PC-3 (cell line): ENCODE measurements at regions of chr5 and their contacts with region 1.

Region 1: GRCh38 chr5:55187370-55187769 is 14.4 kb upstream of the CDC20B start:
- DNase-seq: peak; percentile 44
- ATAC-seq: peak; percentile 31; the same call in 1 of the 2 replicates
- H3K4me3 ChIP-seq: no peak overlapping the region
- H3K27ac ChIP-seq: no peak overlapping the region
- H3K4me1 ChIP-seq: peaks cover 13% of the 10 kb centered on the region
- H3K27me3 ChIP-seq: no peaks in the 10 kb centered on the region
- CTCF ChIP-seq: peak; percentile 41

Region 2: DNA sequence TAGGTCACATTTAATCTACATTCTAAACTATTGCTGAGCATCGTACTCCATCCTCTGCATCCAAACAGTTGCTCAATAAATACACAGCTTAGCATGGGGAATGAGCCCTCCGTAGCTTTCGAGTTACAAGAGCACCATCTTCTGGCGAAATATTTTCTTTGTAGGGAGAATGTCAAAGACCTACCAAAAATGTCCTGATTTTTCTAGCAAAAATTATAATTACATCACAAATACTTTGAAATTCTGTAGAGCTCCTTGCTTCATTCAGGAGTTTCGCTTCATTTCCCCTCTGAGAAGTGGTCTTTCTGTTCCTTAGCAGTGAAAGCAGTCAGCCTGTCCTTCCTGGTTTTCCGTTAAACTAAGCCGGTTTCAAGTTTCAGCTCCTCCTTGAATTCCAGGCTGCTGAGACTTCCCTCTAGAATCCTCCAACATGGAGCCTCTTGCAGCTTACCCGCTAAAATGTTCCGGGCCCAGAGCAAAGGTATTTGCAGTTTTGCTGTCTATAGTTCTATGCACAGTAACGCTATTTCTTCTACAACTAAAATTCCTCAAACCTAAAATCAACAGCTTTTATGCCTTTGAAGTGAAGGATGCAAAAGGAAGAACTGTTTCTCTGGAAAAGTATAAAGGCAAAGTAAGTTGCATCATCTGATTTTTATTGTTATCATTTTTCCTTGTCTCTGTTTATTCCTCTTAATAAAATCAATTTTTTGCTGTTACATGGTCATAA is 27.4 kb before region 1 on chr5 and contains the start of gene GPX8:
- CTCF ChIA-PET with region 1: no interaction called
- POLR2A ChIA-PET with region 1: no interaction called
- intact Hi-C with region 1: no loop called
- DNase-seq: peak; percentile 72
- ATAC-seq: peak; percentile 91
- H3K4me3 ChIP-seq: peak within 1 kb of the TSS; percentile 91
- H3K27ac ChIP-seq: peak within 1 kb of the TSS; percentile 54
- H3K4me1 ChIP-seq: peaks cover 12% of the 10 kb centered on the region
- H3K27me3 ChIP-seq: no peaks in the 10 kb centered on the region
- CTCF ChIP-seq: peak; percentile 88
- total RNA-seq, gene GPX8: 13.0 and 18.3 TPM in 2 replicates

Region 3: DNA sequence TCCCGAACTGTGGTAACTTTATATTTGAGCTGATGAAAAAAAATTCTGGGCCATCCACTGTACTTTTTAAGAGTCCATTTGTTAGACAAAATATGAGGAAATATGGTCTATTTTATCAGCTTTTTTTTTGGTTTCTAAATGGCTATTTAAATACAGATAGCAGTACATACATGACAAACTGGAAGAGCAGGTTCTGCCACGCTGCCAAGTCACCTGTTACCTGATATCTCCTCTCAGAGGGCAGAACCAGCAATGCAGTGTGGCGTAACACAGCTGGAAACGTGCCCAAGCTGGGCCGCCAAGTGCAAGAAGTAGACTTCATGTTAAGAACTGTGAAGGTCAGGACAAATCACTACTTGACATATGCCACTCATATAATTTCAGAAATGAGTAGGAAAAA is 31.6 kb after region 1 on chr5:
- CTCF ChIA-PET with region 1: interaction called, 3 read pairs
- POLR2A ChIA-PET with region 1: interaction called, 10 read pairs
- intact Hi-C with region 1: no loop called
- DNase-seq: peak; percentile 79
- ATAC-seq: no peak
- H3K4me3 ChIP-seq: no peak overlapping the region
- H3K27ac ChIP-seq: no peak overlapping the region
- H3K4me1 ChIP-seq: peaks cover 14% of the 10 kb centered on the region
- H3K27me3 ChIP-seq: no peaks in the 10 kb centered on the region
- CTCF ChIP-seq: no peak

Region 4: DNA sequence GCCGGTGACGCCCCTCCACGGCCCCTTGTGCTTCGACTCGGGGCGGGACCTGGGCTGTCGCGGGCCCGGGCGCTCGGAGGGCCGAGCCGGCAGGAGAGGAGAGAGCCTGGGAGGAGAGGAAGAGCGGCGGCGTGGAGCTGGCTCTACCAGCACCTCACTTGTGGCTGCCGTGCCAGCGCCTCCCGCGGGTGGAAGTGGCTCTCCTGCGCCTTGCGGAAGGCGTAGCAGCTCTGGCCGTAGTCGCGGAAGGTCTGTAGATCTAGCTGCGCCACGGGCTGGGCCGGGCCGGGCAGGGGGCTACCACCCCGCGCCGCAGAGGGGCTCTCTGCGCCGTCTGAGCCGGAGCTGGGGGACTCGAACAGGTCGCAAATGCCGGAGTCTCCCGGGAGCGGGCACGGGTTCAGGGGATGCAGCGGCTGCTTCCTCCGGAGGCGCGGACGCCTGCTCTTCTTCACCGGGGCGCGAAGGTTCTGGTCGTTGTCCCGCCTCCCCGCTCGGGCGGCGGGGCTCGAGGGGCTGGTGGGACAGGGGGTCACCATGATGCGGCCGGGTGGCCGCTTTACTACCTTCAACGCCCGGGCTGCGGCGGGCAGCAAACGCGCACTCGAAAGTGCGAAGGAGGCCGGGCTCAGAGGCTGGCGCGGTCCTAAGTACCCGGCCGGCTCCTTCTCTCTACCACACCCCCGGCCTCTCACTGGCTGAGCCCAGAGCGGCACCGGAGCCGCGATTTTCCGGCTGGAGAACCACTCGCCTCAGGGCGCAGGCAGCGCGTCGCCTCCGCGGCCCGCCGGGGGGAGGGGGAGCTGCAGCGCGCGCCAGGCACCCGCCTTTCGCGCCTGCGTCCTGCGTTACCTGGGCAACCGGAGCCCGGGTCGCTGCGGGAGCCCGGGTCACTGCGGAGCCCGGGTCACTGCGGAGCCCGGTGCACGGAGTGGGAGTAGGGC is 45.9 kb after region 1 on chr5 and contains the start of gene CCNO:
- CTCF ChIA-PET with region 1: interaction called, 4 read pairs
- POLR2A ChIA-PET with region 1: interaction called, 6 read pairs
- intact Hi-C with region 1: loop called (anchors 2 kb)
- DNase-seq: peak; percentile 84
- ATAC-seq: peak; percentile 83
- H3K4me3 ChIP-seq: peak within 1 kb of the TSS; percentile 83
- H3K27ac ChIP-seq: peak within 1 kb of the TSS; percentile 21
- H3K4me1 ChIP-seq: peaks cover 12% of the 10 kb centered on the region; the same call in 1 of the 2 replicates
- H3K27me3 ChIP-seq: no peaks in the 10 kb centered on the region
- CTCF ChIP-seq: no peak
- total RNA-seq, gene CCNO: 3.4 and 5.3 TPM in 2 replicates

Region 5: GRCh38 chr5:55307383-55308253 is 120.2 kb after region 1 on chr5 and contains the starts of genes DHX29 and MTREX:
- CTCF ChIA-PET with region 1: no interaction called
- POLR2A ChIA-PET with region 1: no interaction called
- intact Hi-C with region 1: loop called (anchors 5 kb)
- DNase-seq: peak; percentile 73
- ATAC-seq: peak; percentile 90
- H3K4me3 ChIP-seq: peak within 1 kb of the TSS; percentile 82
- H3K27ac ChIP-seq: peak within 1 kb of the TSS; percentile 87
- H3K4me1 ChIP-seq: peaks cover 32% of the 10 kb centered on the region
- H3K27me3 ChIP-seq: no peaks in the 10 kb centered on the region
- CTCF ChIP-seq: no peak
- total RNA-seq, gene DHX29: 9.4 and 13.4 TPM in 2 replicates
- total RNA-seq, gene MTREX: 25.6 and 44.0 TPM in 2 replicates